ENCODE measurements at regions of chr2 and their contacts with region 1.

Region 1: DNA sequence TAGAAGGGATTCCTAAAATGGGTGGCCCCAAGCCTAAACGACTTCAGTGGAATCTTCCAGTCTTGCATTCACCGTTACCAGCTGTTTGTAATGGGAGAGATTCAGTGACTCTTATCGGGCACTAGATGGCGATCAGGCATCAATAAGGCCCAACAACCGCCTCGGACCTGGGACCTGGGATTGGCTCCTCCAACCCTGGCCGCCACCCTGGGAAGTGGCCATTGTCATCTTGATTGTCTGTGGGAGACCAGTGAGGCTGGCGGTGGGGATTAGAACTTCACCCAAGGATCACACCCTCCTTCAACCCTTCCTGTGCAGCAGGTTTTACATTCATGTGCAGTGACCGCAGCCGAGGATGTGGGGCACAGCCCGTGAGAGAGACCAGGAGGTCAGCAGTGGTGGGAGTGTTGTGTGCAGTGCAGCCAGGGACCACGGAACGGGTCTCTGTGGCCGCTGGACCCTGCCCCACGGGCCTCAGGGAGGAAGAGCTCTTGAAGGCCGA is 85.3 kb downstream of the SPP2 start:
- DNase-seq: peak; percentile 84
- H3K4me3 Mint-ChIP-seq: no peak overlapping the region
- H3K27ac Mint-ChIP-seq: no peak overlapping the region
- H3K4me1 Mint-ChIP-seq: peaks cover 36% of the 10 kb centered on the region
- H3K27me3 Mint-ChIP-seq: no peaks in the 10 kb centered on the region
- CTCF ChIP-seq: peak; percentile 92

Region 2: DNA sequence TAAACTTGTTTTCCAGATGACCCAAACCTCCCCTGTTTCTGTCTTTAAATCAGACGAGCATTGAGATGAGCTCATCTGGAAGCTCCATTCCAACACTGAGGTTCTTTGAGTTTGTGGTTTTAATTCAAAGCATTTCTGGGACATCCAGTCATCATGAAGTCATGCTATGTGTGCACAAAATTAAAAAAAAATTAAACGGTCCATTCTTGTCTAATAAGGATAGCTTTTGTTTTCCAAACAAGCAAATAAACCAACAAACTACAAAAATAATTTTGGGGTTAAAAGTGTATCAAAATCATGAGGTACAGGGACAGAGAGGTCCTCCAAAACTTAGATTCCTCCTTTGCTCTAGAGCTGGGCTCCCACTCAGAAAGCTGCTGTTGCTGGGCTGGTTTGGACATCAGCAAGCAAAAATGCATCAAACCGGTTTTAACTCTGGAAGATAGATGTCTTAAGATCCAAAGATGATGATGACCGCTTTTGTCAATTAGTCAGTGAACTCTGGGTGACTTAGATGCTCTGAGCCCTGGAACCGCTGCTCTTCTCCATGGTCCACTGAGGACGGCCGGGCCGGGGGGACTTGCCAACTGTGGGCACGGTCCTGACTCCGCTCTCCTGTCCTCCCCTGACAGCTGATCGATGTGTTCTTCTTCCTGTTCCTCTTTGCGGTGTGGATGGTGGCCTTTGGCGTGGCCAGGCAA is 153.2 kb before region 1 on chr2:
- CTCF ChIA-PET with region 1: interaction called, 3 read pairs
- POLR2A ChIA-PET with region 1: interaction called, 4 read pairs
- intact Hi-C with region 1: loop called (anchors 2 kb)
- DNase-seq: peak; percentile 53
- H3K4me3 Mint-ChIP-seq: no peak overlapping the region
- H3K27ac Mint-ChIP-seq: no peak overlapping the region
- H3K4me1 Mint-ChIP-seq: peaks cover 17% of the 10 kb centered on the region
- H3K27me3 Mint-ChIP-seq: no peaks in the 10 kb centered on the region
- CTCF ChIP-seq: no peak

Region 3: DNA sequence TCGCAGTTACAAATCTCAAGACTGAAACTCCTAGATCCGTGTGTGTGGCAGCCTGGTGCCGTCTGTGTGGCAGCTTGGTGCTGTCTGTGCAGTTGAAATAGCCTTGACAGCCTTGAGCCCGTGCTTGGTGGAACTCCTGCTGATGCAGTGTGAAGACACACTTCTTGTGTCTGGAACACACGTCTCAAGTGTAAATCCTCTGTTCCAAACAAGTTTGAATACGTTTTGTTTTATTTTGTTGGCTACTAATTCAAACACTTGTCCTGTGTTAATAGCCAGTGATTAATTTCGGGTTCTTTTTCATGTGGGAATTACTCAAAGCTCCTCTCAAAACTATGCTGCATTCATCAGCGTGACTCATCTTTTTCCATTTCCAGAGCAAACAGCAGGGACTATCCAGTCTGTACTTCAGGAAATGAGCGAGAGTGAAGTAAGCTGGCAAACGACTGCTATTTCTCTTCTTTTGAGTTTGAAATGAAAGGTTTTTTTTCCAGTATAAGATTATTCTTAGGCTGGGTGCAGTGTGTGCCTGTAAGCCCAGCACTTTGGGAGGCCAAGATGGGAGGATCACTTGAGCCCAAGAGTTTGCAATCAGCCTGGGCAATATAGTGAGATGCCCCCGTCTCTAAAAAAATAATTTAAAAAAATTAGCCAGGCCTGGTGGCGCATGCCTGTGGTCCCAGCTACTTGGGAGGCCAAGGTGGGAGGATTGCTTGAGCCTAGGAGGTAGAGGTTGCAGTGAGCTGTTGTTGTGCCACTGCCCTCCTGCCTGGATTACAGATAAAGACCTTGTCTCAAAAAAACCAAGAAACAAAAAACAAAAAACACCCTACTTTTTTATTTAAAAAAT is 67.6 kb after region 1 on chr2:
- CTCF ChIA-PET with region 1: interaction called, 5 read pairs
- POLR2A ChIA-PET with region 1: interaction called, 3 read pairs
- intact Hi-C with region 1: loop called (anchors 2 kb)
- DNase-seq: peak; percentile 96
- H3K4me3 Mint-ChIP-seq: peak overlapping the region; percentile 61
- H3K27ac Mint-ChIP-seq: peak overlapping the region; percentile 78
- H3K4me1 Mint-ChIP-seq: peaks cover 7% of the 10 kb centered on the region
- H3K27me3 Mint-ChIP-seq: peaks cover 6% of the 10 kb centered on the region
- CTCF ChIP-seq: no peak

Region 4: DNA sequence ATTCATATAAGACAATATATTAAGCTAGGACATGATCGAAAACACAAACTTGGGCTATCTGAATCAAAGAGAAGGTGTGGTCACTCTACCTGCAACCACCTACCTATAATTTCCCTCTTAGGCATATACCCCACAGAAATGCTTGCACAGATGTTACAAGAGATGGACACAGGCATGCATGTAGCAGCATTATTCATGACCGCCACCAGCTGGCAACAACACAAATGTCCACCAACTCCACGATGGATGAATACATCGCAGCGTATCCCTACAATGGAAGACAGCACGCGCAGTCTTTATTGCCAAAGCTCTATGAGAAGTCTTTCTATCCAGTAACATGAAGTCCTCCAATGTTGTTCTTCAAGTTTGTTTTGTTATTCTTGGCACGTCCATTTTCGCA is 270.3 kb after region 1 on chr2:
- CTCF ChIA-PET with region 1: no interaction called
- POLR2A ChIA-PET with region 1: interaction called, 3 read pairs
- intact Hi-C with region 1: loop called (anchors 1 kb)
- DNase-seq: no peak
- H3K4me3 Mint-ChIP-seq: no peak overlapping the region
- H3K27ac Mint-ChIP-seq: no peak overlapping the region
- H3K4me1 Mint-ChIP-seq: no peaks in the 10 kb centered on the region
- H3K27me3 Mint-ChIP-seq: no peaks in the 10 kb centered on the region
- CTCF ChIP-seq: no peak

Region 5: GRCh38 chr2:235116885-235117492 is 981.2 kb after region 1 on chr2:
- CTCF ChIA-PET with region 1: interaction called, 4 read pairs
- POLR2A ChIA-PET with region 1: no interaction called
- intact Hi-C with region 1: loop called (anchors 10 kb)
- DNase-seq: peak; percentile 50
- H3K4me3 Mint-ChIP-seq: no peak overlapping the region
- H3K27ac Mint-ChIP-seq: no peak overlapping the region
- H3K4me1 Mint-ChIP-seq: no peaks in the 10 kb centered on the region
- H3K27me3 Mint-ChIP-seq: peaks cover 27% of the 10 kb centered on the region
- CTCF ChIP-seq: peak; percentile 60